Mammary epithelial cell (primary cell): ENCODE measurements at regions of chr2 and their contacts with region 1.

Region 1: DNA sequence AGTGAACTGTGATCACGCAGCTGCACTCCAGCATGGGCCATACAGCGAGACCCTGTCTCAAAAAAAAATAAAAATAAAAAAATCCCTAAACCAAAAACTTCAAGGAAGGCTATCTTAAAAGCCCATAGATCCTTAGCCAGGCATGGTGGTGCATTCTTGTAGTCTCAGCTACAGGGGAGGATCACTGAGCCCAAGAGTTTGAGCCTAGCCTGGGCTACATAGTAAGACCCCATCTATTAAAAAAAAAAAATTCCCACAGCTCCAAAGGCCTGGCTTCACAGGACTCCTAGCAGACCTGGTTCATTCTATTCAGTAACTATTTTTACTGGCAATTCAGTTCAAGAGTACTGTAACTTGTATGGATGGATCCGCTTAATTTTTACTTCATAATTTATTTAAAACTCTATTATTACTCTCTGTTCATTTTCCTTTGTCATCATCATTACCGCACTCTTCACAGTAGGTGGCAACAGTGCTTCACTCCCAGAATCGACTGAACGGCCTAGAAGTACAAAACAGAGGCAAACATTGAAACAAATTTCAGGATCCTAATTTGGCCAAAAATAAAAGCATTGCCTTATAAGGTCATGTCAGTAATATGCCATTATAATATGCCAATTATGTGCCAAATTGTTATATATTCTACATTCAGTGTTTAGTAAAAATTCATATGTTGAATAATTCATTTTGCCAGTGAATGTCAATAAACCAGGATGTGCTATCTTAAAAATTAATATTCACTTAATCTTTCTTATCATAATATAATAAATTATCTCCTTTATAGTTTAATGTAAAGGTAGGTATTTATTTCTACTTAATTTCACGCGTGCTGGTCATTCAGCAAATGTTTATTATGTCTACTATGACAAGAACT is 14.3 kb upstream of the STAM2 start:
- DNase-seq: peak; percentile 57
- H3K4me3 ChIP-seq: no peak overlapping the region
- H3K27ac ChIP-seq: no peak overlapping the region
- H3K4me1 ChIP-seq: no peaks in the 10 kb centered on the region
- H3K27me3 ChIP-seq: no peaks in the 10 kb centered on the region
- CTCF ChIP-seq: peak; percentile 86 to 88

Region 2: GRCh38 chr2:151325581-151326095 is 864.2 kb before region 1 on chr2:
- CTCF ChIA-PET with region 1: no interaction called
- dilution Hi-C with region 1: no loop called
- in situ Hi-C with region 1: no loop called
- intact Hi-C with region 1: no loop called
- DNase-seq: no peak
- H3K4me3 ChIP-seq: no peak overlapping the region
- H3K27ac ChIP-seq: no peak overlapping the region
- H3K4me1 ChIP-seq: no peaks in the 10 kb centered on the region
- H3K27me3 ChIP-seq: no peaks in the 10 kb centered on the region
- CTCF ChIP-seq: no peak

Region 3: DNA sequence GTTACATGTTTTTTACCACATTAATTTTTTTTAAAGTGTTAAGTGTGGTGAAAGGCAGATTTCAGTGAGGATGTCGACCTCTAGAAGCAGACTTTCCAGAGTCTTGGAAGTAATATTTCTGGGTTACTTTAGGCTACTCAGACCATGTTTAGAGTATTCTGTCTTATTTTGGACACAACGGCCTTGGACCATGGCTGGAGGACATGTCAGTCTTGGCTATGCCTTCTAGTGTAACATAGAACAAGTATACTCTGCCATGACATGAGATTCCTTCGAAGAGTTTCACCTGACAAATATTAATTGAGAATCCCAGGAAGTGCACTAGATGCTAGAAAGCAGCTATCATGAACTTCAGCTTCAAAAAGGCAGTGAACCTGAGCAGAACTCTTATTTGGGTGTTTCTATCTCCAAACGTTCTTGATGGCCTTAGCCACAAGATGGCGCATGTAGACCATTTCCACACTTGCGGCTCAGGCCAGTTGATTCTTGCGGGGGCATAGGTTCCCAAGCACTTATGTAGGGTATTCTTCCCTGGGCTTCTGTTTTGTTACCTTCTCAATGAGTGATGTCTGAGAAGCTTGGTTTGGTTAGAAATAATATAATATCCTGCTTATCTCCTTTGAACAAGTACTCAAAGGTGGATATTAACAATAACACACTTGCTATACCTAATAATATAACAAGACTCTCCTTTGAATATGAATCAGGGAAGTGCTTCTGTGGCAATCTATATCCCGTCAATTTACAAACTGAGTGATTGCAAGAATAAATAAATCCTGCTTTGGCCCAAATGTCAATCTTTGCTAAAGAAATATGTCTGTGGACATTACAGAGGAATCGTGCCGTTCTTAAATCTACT is 153.0 kb before region 1 on chr2:
- CTCF ChIA-PET with region 1: no interaction called
- dilution Hi-C with region 1: no loop called
- in situ Hi-C with region 1: no loop called
- intact Hi-C with region 1: loop called (anchors 1 kb)
- DNase-seq: peak; percentile 46
- H3K4me3 ChIP-seq: no peak overlapping the region
- H3K27ac ChIP-seq: no peak overlapping the region
- H3K4me1 ChIP-seq: no peaks in the 10 kb centered on the region
- H3K27me3 ChIP-seq: peaks cover 3% of the 10 kb centered on the region
- CTCF ChIP-seq: peak; percentile 85 to 89

Region 4: DNA sequence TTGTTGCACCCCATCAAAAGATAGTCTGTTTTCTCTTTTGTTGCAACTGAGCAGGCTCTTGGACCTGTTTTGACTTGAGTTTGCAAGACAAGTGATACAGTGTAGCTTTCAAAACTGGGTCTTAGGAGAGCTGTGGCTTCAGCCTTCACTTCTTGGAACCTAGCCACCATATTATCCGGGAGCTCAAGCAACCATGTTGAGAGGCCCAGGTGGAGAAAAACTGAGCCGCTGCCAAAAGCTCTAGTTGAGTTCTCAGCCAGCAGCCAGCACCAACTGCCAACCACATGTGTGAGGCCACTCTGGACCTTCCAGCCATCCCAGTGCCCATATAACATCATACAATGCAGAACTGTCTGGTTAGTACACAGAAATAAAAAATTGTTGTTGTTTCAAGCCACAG is 96.4 kb before region 1 on chr2:
- CTCF ChIA-PET with region 1: no interaction called
- dilution Hi-C with region 1: no loop called
- in situ Hi-C with region 1: no loop called
- intact Hi-C with region 1: no loop called
- DNase-seq: no peak
- H3K4me3 ChIP-seq: no peak overlapping the region
- H3K27ac ChIP-seq: no peak overlapping the region
- H3K4me1 ChIP-seq: peaks cover 13% of the 10 kb centered on the region
- H3K27me3 ChIP-seq: peaks cover 19% of the 10 kb centered on the region
- CTCF ChIP-seq: no peak

Region 5: GRCh38 chr2:152421521-152422370 is 231.9 kb after region 1 on chr2:
- CTCF ChIA-PET with region 1: no interaction called
- dilution Hi-C with region 1: no loop called
- in situ Hi-C with region 1: loop called (anchors 10 to 25 kb)
- intact Hi-C with region 1: loop called (anchors 5 kb)
- DNase-seq: peak; percentile 97
- H3K4me3 ChIP-seq: peak overlapping the region; percentile 11 to 21 (median 20)
- H3K27ac ChIP-seq: peak overlapping the region; percentile 96
- H3K4me1 ChIP-seq: peaks cover 33% of the 10 kb centered on the region
- H3K27me3 ChIP-seq: no peaks in the 10 kb centered on the region
- CTCF ChIP-seq: no peak

Region 6: DNA sequence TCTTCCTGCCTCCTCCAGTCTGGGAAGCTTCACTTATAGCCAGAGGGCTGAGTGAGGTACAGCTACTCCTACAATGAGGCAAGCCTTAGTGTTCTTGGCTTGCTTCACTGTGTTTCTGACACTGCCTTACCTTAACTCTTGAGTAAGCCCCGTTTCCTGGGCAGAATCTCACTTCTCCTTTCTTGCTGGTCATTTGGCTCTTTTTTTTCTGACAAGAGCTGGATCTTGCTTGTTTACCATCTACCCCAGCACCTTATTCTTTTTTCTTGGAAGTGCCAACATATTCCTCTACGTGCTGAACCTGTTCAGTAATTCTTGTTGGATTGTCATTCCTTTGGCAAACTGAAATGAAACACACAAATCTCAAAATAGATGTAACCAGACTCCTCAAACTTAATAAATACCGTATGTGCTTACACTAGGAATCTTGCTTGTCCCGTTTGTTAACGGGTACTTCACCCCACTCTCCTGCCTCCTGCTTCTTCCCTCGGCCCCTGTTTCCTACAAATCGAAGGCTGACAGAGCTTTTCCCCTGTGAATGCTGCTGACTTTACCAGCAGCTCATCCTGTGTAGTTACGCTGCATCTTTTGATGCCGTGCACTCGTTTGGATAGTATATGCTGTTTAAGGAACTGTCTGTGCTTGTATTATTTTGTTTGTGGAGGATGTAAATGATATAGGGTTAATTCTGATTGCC is 277.3 kb after region 1 on chr2:
- CTCF ChIA-PET with region 1: no interaction called
- dilution Hi-C with region 1: no loop called
- in situ Hi-C with region 1: no loop called
- intact Hi-C with region 1: loop called (anchors 2 kb)
- DNase-seq: peak; percentile 79
- H3K4me3 ChIP-seq: peak overlapping the region in 1 of 3 experiments; percentile 2
- H3K27ac ChIP-seq: peak overlapping the region; percentile 42
- H3K4me1 ChIP-seq: peaks cover 29% of the 10 kb centered on the region
- H3K27me3 ChIP-seq: no peaks in the 10 kb centered on the region
- CTCF ChIP-seq: no peak

Region 7: GRCh38 chr2:152620208-152620607 is 430.3 kb after region 1 on chr2:
- CTCF ChIA-PET with region 1: no interaction called
- dilution Hi-C with region 1: loop called (anchors 25 kb)
- in situ Hi-C with region 1: loop called in 1 of 2 experiments (anchors 5 kb)
- intact Hi-C with region 1: no loop called
- DNase-seq: no peak
- H3K4me3 ChIP-seq: no peak overlapping the region
- H3K27ac ChIP-seq: no peak overlapping the region
- H3K4me1 ChIP-seq: no peaks in the 10 kb centered on the region
- H3K27me3 ChIP-seq: no peaks in the 10 kb centered on the region
- CTCF ChIP-seq: no peak

Region 8: GRCh38 chr2:152627351-152627957 is 437.6 kb after region 1 on chr2:
- CTCF ChIA-PET with region 1: no interaction called
- dilution Hi-C with region 1: loop called (anchors 25 kb)
- in situ Hi-C with region 1: loop called in 1 of 2 experiments (anchors 5 kb)
- intact Hi-C with region 1: loop called (anchors 1 kb)
- DNase-seq: peak; percentile 12
- H3K4me3 ChIP-seq: no peak overlapping the region
- H3K27ac ChIP-seq: no peak overlapping the region
- H3K4me1 ChIP-seq: no peaks in the 10 kb centered on the region
- H3K27me3 ChIP-seq: no peaks in the 10 kb centered on the region
- CTCF ChIP-seq: peak; percentile 44 to 53

Region 9: DNA sequence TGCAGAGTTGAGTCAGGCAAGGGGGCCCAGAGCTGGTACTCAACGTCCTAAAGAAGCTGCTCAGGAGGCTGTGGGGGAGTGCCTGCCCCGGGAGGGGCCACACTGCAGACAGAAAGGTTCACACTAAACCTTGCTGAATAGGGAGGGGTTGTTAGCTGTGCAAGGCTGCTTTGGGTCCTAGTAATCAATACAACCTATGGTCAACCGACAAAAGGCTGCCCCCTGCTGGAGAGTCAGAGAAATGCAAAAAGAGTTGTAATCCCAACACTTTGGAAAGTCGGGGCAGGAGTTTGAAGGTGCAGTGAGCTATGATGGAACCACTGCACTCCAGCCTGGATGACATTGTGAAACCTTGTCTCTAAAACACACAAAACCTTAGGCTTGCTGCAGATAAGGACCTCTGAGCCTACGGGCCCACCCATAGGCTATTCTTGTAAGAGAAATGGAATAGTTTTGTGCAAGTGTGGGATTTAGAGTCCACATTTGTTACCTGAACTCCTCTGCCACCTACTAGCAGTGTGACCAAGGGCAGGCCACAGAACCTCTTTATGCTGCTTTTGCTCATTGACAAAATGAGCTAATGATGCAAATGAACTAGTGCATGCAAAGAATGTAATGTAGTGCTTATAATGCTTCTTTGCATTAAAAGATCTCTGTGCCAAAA is 445.9 kb after region 1 on chr2:
- CTCF ChIA-PET with region 1: no interaction called
- dilution Hi-C with region 1: no loop called
- in situ Hi-C with region 1: no loop called
- intact Hi-C with region 1: loop called (anchors 1 kb)
- DNase-seq: peak; percentile 42
- H3K4me3 ChIP-seq: no peak overlapping the region
- H3K27ac ChIP-seq: no peak overlapping the region
- H3K4me1 ChIP-seq: no peaks in the 10 kb centered on the region
- H3K27me3 ChIP-seq: no peaks in the 10 kb centered on the region
- CTCF ChIP-seq: peak; percentile 70 to 78

Region 10: DNA sequence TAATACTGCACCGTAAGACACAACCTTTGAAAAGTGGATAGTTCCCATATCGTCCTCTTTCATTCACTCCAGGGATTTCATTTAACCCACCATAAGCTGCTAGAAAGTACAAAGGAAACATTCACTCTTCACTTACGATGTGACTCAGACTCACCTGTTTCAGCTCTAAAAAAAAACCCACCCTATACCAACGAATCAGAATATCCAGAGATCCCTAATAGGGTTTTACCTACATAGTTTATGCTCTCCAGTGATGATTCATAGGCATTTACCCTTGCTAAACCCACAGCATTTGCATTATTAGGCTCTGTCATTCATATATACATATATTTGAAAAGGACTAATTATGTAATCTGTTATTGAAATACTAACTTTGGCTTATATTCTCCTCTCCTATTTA is 467.2 kb after region 1 on chr2:
- CTCF ChIA-PET with region 1: no interaction called
- dilution Hi-C with region 1: no loop called
- in situ Hi-C with region 1: no loop called
- intact Hi-C with region 1: no loop called
- DNase-seq: peak; percentile 40
- H3K4me3 ChIP-seq: no peak overlapping the region
- H3K27ac ChIP-seq: no peak overlapping the region
- H3K4me1 ChIP-seq: no peaks in the 10 kb centered on the region
- H3K27me3 ChIP-seq: no peaks in the 10 kb centered on the region
- CTCF ChIP-seq: no peak